Activated CD8-positive, alpha-beta T cell treated with anti-CD3 and anti-CD28 coated beads for 36 hours (primary cell): ENCODE measurements at regions of chr2 and their contacts with region 1.

Region 1: DNA sequence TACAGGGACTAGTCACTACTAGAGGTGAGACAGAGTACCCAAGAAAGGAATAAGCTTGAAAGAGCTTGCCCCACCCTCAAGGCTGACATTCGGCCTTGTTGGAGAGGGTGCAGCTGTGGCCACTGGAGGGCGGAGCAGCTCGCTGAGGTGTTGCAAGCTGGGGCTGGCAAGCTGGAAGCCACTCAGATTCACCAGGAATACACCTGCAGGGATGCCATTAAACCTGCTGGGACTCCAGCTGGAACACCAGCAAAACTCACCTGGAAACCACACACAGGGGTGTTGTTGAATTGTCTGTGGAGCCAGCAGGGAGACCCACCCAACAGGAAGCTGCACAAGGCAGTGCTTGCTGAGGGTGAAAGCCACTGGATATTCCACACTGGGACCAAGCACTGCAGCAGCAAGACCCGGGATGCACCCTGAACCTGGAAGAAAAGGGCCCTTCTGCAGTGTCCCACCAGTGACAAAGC is 26.1 kb downstream of the KCTD18 start:
- DNase-seq: peak; percentile 58
- ATAC-seq: peak; percentile 71
- H3K4me3 Mint-ChIP-seq: no peak overlapping the region
- H3K27ac Mint-ChIP-seq: no peak overlapping the region
- H3K4me1 Mint-ChIP-seq: no peaks in the 10 kb centered on the region
- H3K27me3 Mint-ChIP-seq: no peaks in the 10 kb centered on the region
- CTCF ChIP-seq: peak; percentile 41

Region 2: DNA sequence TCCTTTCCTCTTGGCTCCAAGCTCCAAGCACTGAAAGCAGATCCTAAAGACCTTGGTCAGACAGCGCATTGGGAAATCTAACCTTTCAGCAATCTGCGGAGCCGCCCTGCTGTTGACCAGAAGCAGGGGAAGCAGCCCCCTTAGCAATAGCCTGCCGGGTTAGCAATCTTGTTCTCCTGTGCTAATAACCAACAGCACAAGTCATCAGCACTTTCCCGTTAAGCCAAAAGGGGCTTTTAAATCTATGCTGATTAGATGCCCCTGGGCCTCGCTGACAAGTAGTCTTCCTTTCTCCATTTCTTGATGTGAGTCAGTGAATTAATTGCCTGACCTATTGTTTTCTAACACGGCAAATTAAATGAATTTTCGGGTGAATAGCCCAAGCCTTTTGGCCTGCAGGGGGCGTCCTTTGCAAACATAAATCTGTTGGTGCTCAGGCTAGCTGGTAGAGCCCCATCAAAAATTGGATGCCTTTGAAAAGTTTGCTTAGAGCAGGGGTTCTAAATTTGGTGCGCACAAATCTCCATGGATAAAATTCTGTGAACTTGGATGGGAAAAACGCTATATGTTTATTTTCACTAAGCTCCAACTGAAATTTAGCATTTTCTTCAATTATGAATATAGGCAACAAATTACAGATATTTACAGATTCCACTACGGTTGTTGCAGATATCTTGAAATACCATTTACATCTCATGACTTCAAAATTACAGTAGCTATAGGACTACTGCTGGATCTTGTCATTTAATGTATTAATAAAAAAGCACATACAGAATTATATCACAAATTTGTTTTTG is 503.7 kb before region 1 on chr2:
- CTCF ChIA-PET with region 1: interaction called, 41 read pairs
- POLR2A ChIA-PET with region 1: no interaction called
- intact Hi-C with region 1: loop called (anchors 5 kb)
- DNase-seq: peak; percentile 93
- ATAC-seq: peak; percentile 45
- H3K4me3 Mint-ChIP-seq: no peak overlapping the region
- H3K27ac Mint-ChIP-seq: no peak overlapping the region
- H3K4me1 Mint-ChIP-seq: peaks cover 18% of the 10 kb centered on the region
- H3K27me3 Mint-ChIP-seq: no peaks in the 10 kb centered on the region
- CTCF ChIP-seq: peak; percentile 75

Region 3: GRCh38 chr2:199985625-199986207 is 498.0 kb before region 1 on chr2:
- CTCF ChIA-PET with region 1: interaction called, 41 read pairs
- POLR2A ChIA-PET with region 1: no interaction called
- intact Hi-C with region 1: loop called (anchors 5 kb)
- DNase-seq: peak; percentile 82
- ATAC-seq: peak; percentile 96
- H3K4me3 Mint-ChIP-seq: no peak overlapping the region
- H3K27ac Mint-ChIP-seq: no peak overlapping the region
- H3K4me1 Mint-ChIP-seq: no peaks in the 10 kb centered on the region
- H3K27me3 Mint-ChIP-seq: no peaks in the 10 kb centered on the region
- CTCF ChIP-seq: peak; percentile 56

Region 4: DNA sequence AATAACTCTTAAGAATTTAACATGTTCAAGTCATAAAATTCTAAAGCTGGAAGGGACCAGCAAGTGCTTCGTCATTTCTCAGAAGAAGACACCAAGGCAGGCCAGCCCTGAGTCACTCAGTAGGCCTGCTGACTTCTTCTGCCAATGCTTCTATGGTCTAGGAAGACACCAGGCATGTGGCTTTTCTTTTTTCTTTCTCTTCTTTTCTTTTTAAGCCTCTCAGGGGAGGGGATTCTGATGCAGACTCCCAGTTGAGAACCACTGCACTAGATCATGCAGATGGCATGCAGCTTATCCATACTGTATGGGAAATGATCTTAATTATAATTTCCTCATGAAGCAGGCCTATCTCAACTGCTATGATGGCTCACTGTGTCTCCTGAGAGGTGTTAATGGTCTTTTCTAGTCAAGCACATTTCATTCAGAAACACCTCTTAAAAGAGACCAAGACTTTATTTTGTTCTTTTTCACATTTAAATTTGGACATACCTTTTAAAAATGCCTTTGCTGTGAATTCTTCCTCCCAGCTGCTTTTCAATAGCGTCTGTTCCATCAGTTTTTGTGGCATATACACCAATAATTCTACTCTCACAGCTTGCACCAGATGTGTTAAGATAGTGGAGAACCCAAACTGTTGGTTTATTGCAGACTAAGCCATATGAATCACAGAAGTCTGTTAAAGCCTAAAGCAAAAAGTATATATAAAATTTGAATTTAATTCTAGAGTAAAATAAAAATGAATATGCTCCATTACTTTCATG is 14.8 kb after region 1 on chr2:
- CTCF ChIA-PET with region 1: interaction called, 34 read pairs
- POLR2A ChIA-PET with region 1: interaction called, 3 read pairs
- intact Hi-C with region 1: no loop called
- DNase-seq: no peak
- ATAC-seq: no peak
- H3K4me3 Mint-ChIP-seq: no peak overlapping the region
- H3K27ac Mint-ChIP-seq: no peak overlapping the region
- H3K4me1 Mint-ChIP-seq: no peaks in the 10 kb centered on the region
- H3K27me3 Mint-ChIP-seq: no peaks in the 10 kb centered on the region
- CTCF ChIP-seq: no peak

Region 5: DNA sequence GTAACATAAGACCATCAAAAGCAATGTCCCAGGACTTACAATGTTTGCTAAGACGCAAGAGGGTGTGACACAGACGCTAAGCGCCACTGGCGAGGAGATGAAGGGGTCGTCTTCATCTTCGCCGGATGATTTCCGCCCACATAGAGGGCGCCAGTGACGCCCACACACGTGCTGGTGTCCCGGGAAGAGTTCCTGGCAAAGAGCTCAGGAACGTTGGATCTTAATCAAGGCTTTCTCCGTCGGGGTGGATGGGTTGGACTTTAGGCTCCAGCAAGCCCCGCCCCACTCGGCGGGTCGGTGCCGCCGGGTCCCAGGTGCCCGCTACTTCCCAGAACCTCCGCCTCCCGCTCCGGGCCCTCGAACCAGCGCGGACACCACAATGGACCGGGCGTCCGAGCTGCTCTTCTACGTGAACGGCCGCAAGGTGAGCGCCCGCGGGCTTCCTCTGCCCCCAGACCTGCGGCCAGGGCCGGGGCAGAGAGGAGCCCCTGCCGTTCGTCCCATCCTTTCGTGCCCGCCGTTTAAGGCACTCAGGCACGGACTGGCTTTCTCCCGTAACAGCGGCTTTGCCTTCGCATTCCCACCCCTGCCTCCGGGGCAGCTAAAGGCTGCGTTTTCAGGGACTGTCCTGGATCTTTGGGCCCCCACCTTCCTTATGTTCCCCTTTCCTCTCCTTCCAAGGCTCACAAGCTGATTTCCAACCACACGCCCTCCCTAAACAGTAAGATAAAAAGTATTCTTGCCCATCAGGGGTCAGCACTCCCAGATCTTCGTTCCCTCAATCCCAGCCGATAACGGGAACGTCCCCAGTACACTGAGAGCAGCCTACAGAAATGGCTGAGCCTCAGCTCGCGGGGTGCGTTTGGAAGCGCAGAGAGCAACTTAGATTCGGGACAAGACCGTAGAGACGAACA is 102.2 kb after region 1 on chr2 and contains the start of gene AOX1:
- CTCF ChIA-PET with region 1: no interaction called
- POLR2A ChIA-PET with region 1: no interaction called
- intact Hi-C with region 1: no loop called
- DNase-seq: peak; percentile 38
- ATAC-seq: peak; percentile 68
- H3K4me3 Mint-ChIP-seq: peak within 1 kb of the TSS; percentile 71
- H3K27ac Mint-ChIP-seq: no peak within 1 kb of the TSS
- H3K4me1 Mint-ChIP-seq: peaks cover 4% of the 10 kb centered on the region
- H3K27me3 Mint-ChIP-seq: peaks cover 10% of the 10 kb centered on the region
- CTCF ChIP-seq: no peak
- total RNA-seq, gene AOX1: 0.54 to 0.69 TPM